Activated CD8-positive, alpha-beta T cell treated with anti-CD3 and anti-CD28 coated beads for 36 hours (primary cell): ENCODE measurements at regions of chr2 and their contacts with region 1.

Region 1: GRCh38 chr2:190534310-190535120 is at the start of gene NEMP2:
- DNase-seq: peak; percentile 86
- ATAC-seq: peak; percentile 78
- H3K4me3 Mint-ChIP-seq: peak within 1 kb of the TSS; percentile 96
- H3K27ac Mint-ChIP-seq: peak within 1 kb of the TSS; percentile 100
- H3K4me1 Mint-ChIP-seq: peaks cover 52% of the 10 kb centered on the region
- H3K27me3 Mint-ChIP-seq: no peaks in the 10 kb centered on the region
- CTCF ChIP-seq: no peak
- total RNA-seq, gene NEMP2: 17.2 to 19.5 TPM

Region 2: DNA sequence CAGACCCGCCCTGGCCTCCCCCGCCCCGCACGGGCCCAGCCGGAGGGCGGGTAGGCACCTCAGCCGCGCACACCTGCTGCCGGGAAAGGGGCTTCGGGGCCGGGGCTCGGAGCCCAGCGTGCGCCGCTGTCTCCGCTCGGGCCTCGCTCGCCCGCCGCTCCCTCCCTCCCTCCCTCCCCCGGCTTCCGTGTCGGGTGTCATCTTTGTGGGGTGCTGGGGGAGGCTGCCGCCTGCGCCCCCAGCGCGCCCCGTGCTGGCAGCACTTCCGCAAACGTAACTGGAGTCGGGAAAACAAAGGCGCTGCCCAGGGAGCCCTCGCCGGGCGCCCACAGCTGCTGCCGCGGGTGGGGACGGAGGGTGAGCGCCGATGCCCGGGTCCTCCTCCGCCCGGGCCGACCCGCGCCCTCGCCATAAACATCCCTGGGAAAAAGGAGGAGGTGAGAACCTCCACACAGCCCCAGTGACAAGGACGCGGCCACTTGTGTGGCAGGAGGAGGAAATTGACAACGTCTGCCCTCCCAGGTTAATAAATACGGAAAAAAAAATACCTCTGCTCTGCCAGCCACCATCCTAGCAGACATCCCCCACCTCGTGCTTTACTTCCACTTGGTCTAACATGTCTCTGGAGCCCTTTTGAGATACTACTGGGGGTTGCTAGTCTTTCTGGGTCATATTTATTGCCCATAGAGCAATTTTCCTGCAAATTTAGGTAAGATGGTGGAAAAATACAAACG is 125.8 kb before region 1 on chr2:
- CTCF ChIA-PET with region 1: no interaction called
- POLR2A ChIA-PET with region 1: interaction called, 11 read pairs
- intact Hi-C with region 1: no loop called
- DNase-seq: peak; percentile 79
- ATAC-seq: peak; percentile 57
- H3K4me3 Mint-ChIP-seq: peak overlapping the region; percentile 88
- H3K27ac Mint-ChIP-seq: peak overlapping the region; percentile 95
- H3K4me1 Mint-ChIP-seq: peaks cover 34% of the 10 kb centered on the region
- H3K27me3 Mint-ChIP-seq: no peaks in the 10 kb centered on the region
- CTCF ChIP-seq: no peak

Region 3: GRCh38 chr2:190648289-190649034 is 113.9 kb after region 1 on chr2:
- CTCF ChIA-PET with region 1: interaction called, 4 read pairs
- POLR2A ChIA-PET with region 1: interaction called, 4 read pairs
- intact Hi-C with region 1: loop called (anchors 5 kb)
- DNase-seq: peak; percentile 78
- ATAC-seq: peak; percentile 65
- H3K4me3 Mint-ChIP-seq: peak overlapping the region; percentile 68
- H3K27ac Mint-ChIP-seq: peak overlapping the region; percentile 73
- H3K4me1 Mint-ChIP-seq: peaks cover 30% of the 10 kb centered on the region
- H3K27me3 Mint-ChIP-seq: no peaks in the 10 kb centered on the region
- CTCF ChIP-seq: no peak

Region 4: GRCh38 chr2:190759749-190760213 is 225.3 kb after region 1 on chr2:
- CTCF ChIA-PET with region 1: interaction called, 4 read pairs
- POLR2A ChIA-PET with region 1: no interaction called
- intact Hi-C with region 1: loop called (anchors 10 kb)
- DNase-seq: no peak
- ATAC-seq: no peak
- H3K4me3 Mint-ChIP-seq: peak overlapping the region; percentile 58
- H3K27ac Mint-ChIP-seq: peak overlapping the region; percentile 70
- H3K4me1 Mint-ChIP-seq: peaks cover 34% of the 10 kb centered on the region
- H3K27me3 Mint-ChIP-seq: no peaks in the 10 kb centered on the region
- CTCF ChIP-seq: no peak